Ascending aorta (tissue), 2 donors: ENCODE measurements at regions of chr4 and their contacts with region 1.

Region 1: GRCh38 chr4:80184053-80184790 is 13.1 kb upstream of the PRDM8 start:
- DNase-seq: peak in 1 of 2 donors; percentile 91
- H3K4me3 ChIP-seq: peak overlapping the region; percentile 67 to 72
- H3K27ac ChIP-seq: peak overlapping the region; percentile 32 to 71
- H3K4me1 ChIP-seq: peaks cover 0 to 10% of the 10 kb centered on the region in 2 donors
- H3K27me3 ChIP-seq: peaks cover 5% of the 10 kb centered on the region
- CTCF ChIP-seq: peak; percentile 63 to 89 (median 88)

Region 2: GRCh38 chr4:78775303-78776030 is 1408.8 kb before region 1 on chr4:
- intact Hi-C with region 1: loop called (anchors 10 kb)
- DNase-seq: peak; percentile 60 to 95
- H3K4me3 ChIP-seq: peak overlapping the region; percentile 73 to 97
- H3K27ac ChIP-seq: peak overlapping the region; percentile 93 to 99
- H3K4me1 ChIP-seq: peaks cover 4 to 5% of the 10 kb centered on the region in 2 donors
- H3K27me3 ChIP-seq: no peaks in the 10 kb centered on the region
- CTCF ChIP-seq: no peak

Region 3: GRCh38 chr4:80072744-80073472 is 111.3 kb before region 1 on chr4 and contains the start of gene ANTXR2:
- intact Hi-C with region 1: loop called (anchors 5 kb)
- DNase-seq: peak; percentile 71 to 96
- H3K4me3 ChIP-seq: peak within 1 kb of the TSS; percentile 79 to 89
- H3K27ac ChIP-seq: peak within 1 kb of the TSS; percentile 83 to 91
- H3K4me1 ChIP-seq: peaks cover 0 to 14% of the 10 kb centered on the region in 2 donors
- H3K27me3 ChIP-seq: no peaks in the 10 kb centered on the region
- CTCF ChIP-seq: peak in 1 of 3 experiments; percentile 17
- total RNA-seq, gene ANTXR2: 16.8 TPM

Region 4: DNA sequence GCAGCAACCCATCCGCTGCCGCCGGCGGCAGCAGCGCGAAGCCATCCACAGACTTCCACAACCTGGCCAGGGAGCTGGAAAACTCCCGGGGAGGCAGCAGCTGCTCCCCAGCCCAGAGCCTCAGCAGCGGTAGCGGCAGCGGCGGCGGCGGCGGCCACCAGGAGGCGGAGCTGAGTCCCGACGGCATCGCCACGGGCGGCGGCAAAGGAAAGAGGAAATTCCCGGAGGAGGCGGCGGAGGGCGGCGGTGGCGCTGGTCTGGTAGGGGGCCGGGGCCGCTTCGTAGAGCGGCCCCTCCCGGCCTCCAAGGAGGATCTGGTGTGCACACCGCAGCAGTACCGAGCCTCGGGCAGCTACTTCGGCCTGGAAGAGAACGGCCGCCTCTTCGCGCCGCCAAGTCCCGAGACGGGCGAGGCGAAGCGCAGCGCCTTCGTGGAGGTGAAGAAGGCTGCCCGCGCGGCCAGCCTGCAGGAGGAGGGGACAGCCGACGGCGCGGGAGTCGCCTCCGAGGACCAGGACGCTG is 18.0 kb after region 1 on chr4:
- intact Hi-C with region 1: loop called (anchors 2 kb)
- DNase-seq: peak in 1 of 2 donors; percentile 89
- H3K4me3 ChIP-seq: peak overlapping the region; percentile 75 to 76
- H3K27ac ChIP-seq: peak overlapping the region; percentile 6 to 57
- H3K4me1 ChIP-seq: peaks cover under 1 to 7% of the 10 kb centered on the region in 2 donors
- H3K27me3 ChIP-seq: peaks cover 31% of the 10 kb centered on the region
- CTCF ChIP-seq: peak; percentile 71 to 91 (median 91)

Region 5: GRCh38 chr4:80215449-80216052 is 31.3 kb after region 1 on chr4:
- intact Hi-C with region 1: loop called (anchors 1 kb)
- DNase-seq: no peak
- H3K4me3 ChIP-seq: no peak overlapping the region
- H3K27ac ChIP-seq: no peak overlapping the region
- H3K4me1 ChIP-seq: no peaks in the 10 kb centered on the region
- H3K27me3 ChIP-seq: no peaks in the 10 kb centered on the region
- CTCF ChIP-seq: peak; percentile 39 to 66 (median 49)